Common myeloid progenitor, CD34-positive (primary cell): ENCODE measurements at regions of chr2 and their contacts with region 1.

Region 1: GRCh38 chr2:117997872-117998454 is 15.9 kb downstream of the CCDC93 start:
- DNase-seq: no peak
- H3K4me3 ChIP-seq: no peak overlapping the region
- H3K27ac ChIP-seq: no peak overlapping the region
- H3K4me1 ChIP-seq: no peaks in the 10 kb centered on the region
- H3K27me3 ChIP-seq: no peaks in the 10 kb centered on the region

Region 2: DNA sequence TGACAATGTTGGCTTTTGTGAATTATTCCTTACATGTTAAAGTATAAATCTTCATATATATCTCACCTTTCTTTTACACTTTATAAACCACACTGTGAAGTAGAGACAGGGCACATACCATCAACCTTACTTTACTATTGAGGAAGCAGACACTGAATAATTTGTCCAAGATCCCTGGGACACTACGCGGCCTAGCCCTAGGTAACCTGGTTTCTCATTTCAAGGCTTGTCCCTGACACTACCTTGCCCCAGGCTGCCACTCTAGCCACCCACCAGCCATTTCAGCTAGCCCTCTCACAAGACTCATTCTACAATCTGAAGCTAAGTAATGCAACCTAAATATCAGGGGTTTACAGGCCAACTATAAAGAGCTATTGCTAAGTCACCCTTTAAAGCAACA is 10.8 kb before region 1 on chr2:
- CTCF ChIA-PET with region 1: interaction called, 27 read pairs
- POLR2A ChIA-PET with region 1: interaction called, 3 read pairs
- DNase-seq: no peak
- H3K4me3 ChIP-seq: no peak overlapping the region
- H3K27ac ChIP-seq: no peak overlapping the region
- H3K4me1 ChIP-seq: no peaks in the 10 kb centered on the region
- H3K27me3 ChIP-seq: no peaks in the 10 kb centered on the region

Region 3: GRCh38 chr2:118403658-118404451 is 405.9 kb after region 1 on chr2:
- CTCF ChIA-PET with region 1: no interaction called
- POLR2A ChIA-PET with region 1: no interaction called
- DNase-seq: no peak
- H3K4me3 ChIP-seq: no peak overlapping the region
- H3K27ac ChIP-seq: no peak overlapping the region
- H3K4me1 ChIP-seq: no peaks in the 10 kb centered on the region
- H3K27me3 ChIP-seq: no peaks in the 10 kb centered on the region